ENCODE measurements at regions of chr1 and their contacts with region 1.

Region 1: DNA sequence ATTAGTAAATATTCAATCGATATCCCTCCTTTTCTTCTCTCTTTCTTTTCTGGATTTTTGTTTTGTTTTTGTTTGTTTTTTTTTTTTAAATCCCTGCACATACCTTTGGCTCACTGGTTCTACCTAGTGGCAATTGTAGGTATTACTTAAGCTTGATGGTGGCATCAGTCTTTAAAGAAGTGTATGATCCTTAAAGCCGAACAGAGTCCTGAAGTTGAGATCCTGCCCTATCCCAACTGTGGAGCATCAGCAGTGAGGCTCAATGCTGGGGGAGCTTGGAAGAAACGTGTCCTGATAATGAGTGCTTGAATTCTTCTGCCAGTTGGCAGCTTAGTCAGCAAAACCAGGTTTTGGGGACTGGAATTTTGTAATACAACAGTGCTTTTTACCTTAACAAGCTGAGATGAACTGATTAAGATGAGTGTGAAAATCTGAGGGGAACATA is 60.8 kb downstream of the FASLG start:
- DNase-seq: no peak
- H3K4me3 ChIP-seq: peak overlapping the region in 2 of 3 experiments; percentile 12 to 24
- H3K27ac ChIP-seq: peak overlapping the region; percentile 54
- H3K4me1 ChIP-seq: peaks cover 44% of the 10 kb centered on the region
- H3K27me3 ChIP-seq: no peaks in the 10 kb centered on the region
- CTCF ChIP-seq: peak; percentile 65 to 78

Region 2: GRCh38 chr1:172532700-172533509 is 186.8 kb before region 1 on chr1 and contains the start of gene SUCO:
- CTCF ChIA-PET with region 1: no interaction called
- dilution Hi-C with region 1: no loop called
- in situ Hi-C with region 1: no loop called
- intact Hi-C with region 1: loop called (anchors 1 kb)
- DNase-seq: peak; percentile 100
- H3K4me3 ChIP-seq: peak within 1 kb of the TSS; percentile 94 to 97 (median 95)
- H3K27ac ChIP-seq: peak within 1 kb of the TSS; percentile 90
- H3K4me1 ChIP-seq: peaks cover 20% of the 10 kb centered on the region
- H3K27me3 ChIP-seq: no peaks in the 10 kb centered on the region
- CTCF ChIP-seq: peak in 1 of 2 donors; percentile 28
- total RNA-seq, gene SUCO: 31.9 to 36.2 TPM

Region 3: GRCh38 chr1:172549621-172550280 is 170.0 kb before region 1 on chr1:
- CTCF ChIA-PET with region 1: no interaction called
- dilution Hi-C with region 1: no loop called
- in situ Hi-C with region 1: no loop called
- intact Hi-C with region 1: no loop called
- DNase-seq: no peak
- H3K4me3 ChIP-seq: peak overlapping the region in 1 of 3 experiments; percentile 35
- H3K27ac ChIP-seq: peak overlapping the region; percentile 31
- H3K4me1 ChIP-seq: no peaks in the 10 kb centered on the region
- H3K27me3 ChIP-seq: no peaks in the 10 kb centered on the region
- CTCF ChIP-seq: no peak

Region 4: GRCh38 chr1:172638885-172639831 is 80.6 kb before region 1 on chr1:
- CTCF ChIA-PET with region 1: interaction called, 3 read pairs
- dilution Hi-C with region 1: no loop called
- in situ Hi-C with region 1: no loop called
- intact Hi-C with region 1: loop called (anchors 1 kb)
- DNase-seq: peak; percentile 97
- H3K4me3 ChIP-seq: peak overlapping the region; percentile 25 to 30 (median 29)
- H3K27ac ChIP-seq: peak overlapping the region; percentile 97
- H3K4me1 ChIP-seq: peaks cover 47% of the 10 kb centered on the region
- H3K27me3 ChIP-seq: no peaks in the 10 kb centered on the region
- CTCF ChIP-seq: no peak